ENCODE measurements at regions of chr14 and their contacts with region 1.

Region 1: DNA sequence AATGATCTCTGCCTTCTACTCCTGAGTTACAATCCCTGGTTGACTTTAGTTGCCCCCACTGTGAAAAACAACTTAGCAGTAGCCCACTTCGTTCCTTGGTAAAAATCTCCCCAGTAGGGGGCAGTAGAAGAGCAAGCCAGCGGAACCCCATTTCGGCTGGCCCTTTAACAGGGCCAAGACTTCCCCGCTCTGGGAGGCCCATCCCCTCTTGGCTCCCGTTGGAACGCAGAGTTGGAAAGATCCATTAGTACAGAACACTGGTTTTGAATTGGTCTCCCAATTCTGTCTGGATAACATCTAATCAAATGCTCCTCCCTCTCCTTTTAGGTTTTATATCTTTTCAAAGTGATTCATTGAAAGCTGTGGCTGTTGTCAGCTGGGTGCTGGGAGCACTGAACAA is 1133.3 kb downstream of the BCL11B start:
- DNase-seq: peak; percentile 69 to 81 (median 76)
- H3K4me3 ChIP-seq: peak overlapping the region in 1 of 2 donors; percentile 1
- H3K4me3 Mint-ChIP-seq: peak overlapping the region; percentile 52 to 88 (median 74)
- H3K27ac ChIP-seq: peak overlapping the region; percentile 59
- H3K27ac Mint-ChIP-seq: peak overlapping the region; percentile 84 to 96 (median 92)
- H3K4me1 ChIP-seq: peaks cover 88% of the 10 kb centered on the region
- H3K4me1 Mint-ChIP-seq: peaks cover 59 to 90% (median 77%) of the 10 kb centered on the region in 4 donors
- H3K27me3 ChIP-seq: no peaks in the 10 kb centered on the region
- H3K27me3 Mint-ChIP-seq: no peaks in the 10 kb centered on the region

Region 2: DNA sequence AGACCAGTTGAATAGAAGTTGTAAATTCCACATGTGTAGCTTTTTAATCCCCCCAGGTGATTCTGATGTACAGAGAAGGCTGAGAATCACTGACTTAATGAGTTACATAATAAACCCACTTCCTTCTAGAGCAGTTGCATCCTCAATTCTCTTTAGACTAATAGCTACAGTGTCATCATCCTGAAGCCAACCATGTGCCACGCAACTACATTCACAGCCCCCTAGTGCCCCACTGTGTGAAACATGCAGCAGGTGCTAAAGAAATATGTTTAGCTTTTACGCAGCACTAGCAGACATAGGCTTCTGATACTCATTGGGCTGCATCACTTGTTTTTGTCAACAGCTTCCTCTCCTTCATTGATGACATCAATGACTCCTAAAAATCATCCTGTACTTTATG is 35.0 kb before region 1 on chr14:
- CTCF ChIA-PET with region 1: no interaction called
- POLR2A ChIA-PET with region 1: no interaction called
- intact Hi-C with region 1: no loop called
- DNase-seq: peak in 4 of 5 donors; percentile 2 to 15 (median 7)
- H3K4me3 ChIP-seq: no peak overlapping the region
- H3K4me3 Mint-ChIP-seq: no peak overlapping the region
- H3K27ac ChIP-seq: no peak overlapping the region
- H3K27ac Mint-ChIP-seq: no peak overlapping the region
- H3K4me1 ChIP-seq: no peaks in the 10 kb centered on the region
- H3K4me1 Mint-ChIP-seq: peaks cover 0 to 11% (median 9%) of the 10 kb centered on the region in 4 donors
- H3K27me3 ChIP-seq: no peaks in the 10 kb centered on the region
- H3K27me3 Mint-ChIP-seq: no peaks in the 10 kb centered on the region

Region 3: DNA sequence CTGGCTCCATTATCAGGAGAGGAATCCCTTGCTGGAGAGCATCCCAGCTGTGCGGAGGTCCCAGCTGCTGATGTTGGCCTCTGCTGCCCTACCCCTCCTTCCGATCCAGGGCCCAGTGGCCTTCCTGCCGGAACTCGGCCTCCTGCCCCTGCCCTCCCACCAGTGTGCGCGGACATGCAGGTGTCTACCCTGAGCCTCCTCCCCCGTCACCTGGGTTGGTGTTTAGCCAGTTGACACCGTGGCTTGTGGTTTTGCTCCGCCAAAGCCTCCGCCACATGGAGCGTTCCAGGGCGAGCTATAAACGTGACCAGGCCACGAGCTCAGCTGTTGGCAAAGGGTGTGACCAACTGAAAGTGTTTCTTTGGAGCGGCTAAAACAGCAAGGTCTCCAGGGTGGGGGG is 29.0 kb after region 1 on chr14:
- CTCF ChIA-PET with region 1: interaction called, 68 read pairs
- POLR2A ChIA-PET with region 1: interaction called, 44 read pairs
- intact Hi-C with region 1: no loop called
- DNase-seq: peak in 2 of 5 donors; percentile 22 to 54
- H3K4me3 ChIP-seq: peak overlapping the region in 1 of 2 donors; percentile 15
- H3K4me3 Mint-ChIP-seq: peak overlapping the region in 7 of 8 donors; percentile 60 to 90 (median 71)
- H3K27ac ChIP-seq: peak overlapping the region; percentile 45
- H3K27ac Mint-ChIP-seq: peak overlapping the region; percentile 79 to 99 (median 90)
- H3K4me1 ChIP-seq: peaks cover 63% of the 10 kb centered on the region
- H3K4me1 Mint-ChIP-seq: peaks cover 53 to 82% (median 68%) of the 10 kb centered on the region in 4 donors
- H3K27me3 ChIP-seq: no peaks in the 10 kb centered on the region
- H3K27me3 Mint-ChIP-seq: no peaks in the 10 kb centered on the region

Region 4: DNA sequence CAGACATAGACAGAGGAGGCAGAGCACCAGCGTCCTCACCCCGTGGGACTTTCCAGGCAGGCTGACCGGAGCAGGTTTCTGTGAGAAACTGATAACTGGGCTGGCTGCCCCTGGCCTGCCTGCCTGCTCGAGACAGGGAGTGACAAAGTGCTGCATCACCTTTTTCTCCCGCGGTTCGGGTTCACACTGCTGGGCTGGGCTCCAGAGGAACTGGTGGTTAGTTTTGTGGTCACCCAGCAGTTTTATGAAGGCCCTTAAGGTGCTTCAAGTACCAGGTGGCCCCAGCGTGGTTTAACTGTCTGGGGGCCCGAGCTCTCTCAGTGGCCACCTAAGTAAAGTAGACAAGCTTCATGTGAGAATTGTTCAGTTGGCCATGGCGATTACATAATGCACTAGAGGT is 59.7 kb after region 1 on chr14:
- CTCF ChIA-PET with region 1: interaction called, 58 read pairs
- POLR2A ChIA-PET with region 1: interaction called, 7 read pairs
- intact Hi-C with region 1: no loop called
- DNase-seq: peak in 4 of 5 donors; percentile 46 to 68 (median 48)
- H3K4me3 ChIP-seq: peak overlapping the region in 1 of 2 donors; percentile 12
- H3K4me3 Mint-ChIP-seq: peak overlapping the region in 7 of 8 donors; percentile 45 to 81 (median 72)
- H3K27ac ChIP-seq: peak overlapping the region; percentile 12
- H3K27ac Mint-ChIP-seq: peak overlapping the region; percentile 78 to 88 (median 84)
- H3K4me1 ChIP-seq: peaks cover 81% of the 10 kb centered on the region
- H3K4me1 Mint-ChIP-seq: peaks cover 67 to 94% (median 75%) of the 10 kb centered on the region in 4 donors
- H3K27me3 ChIP-seq: no peaks in the 10 kb centered on the region
- H3K27me3 Mint-ChIP-seq: no peaks in the 10 kb centered on the region

Region 5: DNA sequence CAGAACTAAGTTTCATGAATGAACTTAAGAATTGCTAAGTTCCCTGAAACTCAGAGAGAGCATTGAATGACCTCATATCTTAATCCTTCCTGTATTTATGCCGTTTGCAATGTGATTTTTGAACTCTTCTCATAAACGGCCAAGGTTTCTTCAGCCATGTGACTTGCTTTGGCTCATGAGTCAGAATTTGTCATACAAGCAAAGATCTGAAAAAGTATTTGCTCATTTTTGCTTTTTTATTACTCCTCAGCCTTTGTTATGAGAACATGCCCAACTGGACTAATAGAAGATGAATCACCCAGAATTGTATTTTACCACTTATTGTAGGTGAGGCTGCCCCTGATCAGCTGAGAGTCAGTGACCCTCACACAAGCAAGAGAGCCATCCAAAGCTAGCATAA is 439.5 kb after region 1 on chr14:
- CTCF ChIA-PET with region 1: no interaction called
- POLR2A ChIA-PET with region 1: no interaction called
- intact Hi-C with region 1: loop called (anchors 10 kb)
- DNase-seq: no peak
- H3K4me3 ChIP-seq: no peak overlapping the region
- H3K4me3 Mint-ChIP-seq: no peak overlapping the region
- H3K27ac ChIP-seq: no peak overlapping the region
- H3K27ac Mint-ChIP-seq: no peak overlapping the region
- H3K4me1 ChIP-seq: no peaks in the 10 kb centered on the region
- H3K4me1 Mint-ChIP-seq: no peaks in the 10 kb centered on the region
- H3K27me3 ChIP-seq: no peaks in the 10 kb centered on the region
- H3K27me3 Mint-ChIP-seq: peaks cover 0 to 5% of the 10 kb centered on the region in 2 donors

Region 6: GRCh38 chr14:98984719-98985041 is 846.0 kb after region 1 on chr14:
- CTCF ChIA-PET with region 1: interaction called, 7 read pairs
- POLR2A ChIA-PET with region 1: interaction called, 3 read pairs
- intact Hi-C with region 1: loop called (anchors 1 kb)
- DNase-seq: peak; percentile 81 to 87 (median 87)
- H3K4me3 ChIP-seq: peak overlapping the region in 1 of 2 donors; percentile 16
- H3K4me3 Mint-ChIP-seq: peak overlapping the region; percentile 42 to 93 (median 81)
- H3K27ac ChIP-seq: peak overlapping the region; percentile 47
- H3K27ac Mint-ChIP-seq: peak overlapping the region; percentile 92 to 99 (median 97)
- H3K4me1 ChIP-seq: peaks cover 37% of the 10 kb centered on the region
- H3K4me1 Mint-ChIP-seq: peaks cover 32 to 69% (median 53%) of the 10 kb centered on the region in 4 donors
- H3K27me3 ChIP-seq: no peaks in the 10 kb centered on the region
- H3K27me3 Mint-ChIP-seq: no peaks in the 10 kb centered on the region

Measured in CD4-positive, alpha-beta memory T cell (primary cell).